ENCODE measurements at regions of chr1 and their contacts with region 1.

Region 1: GRCh38 chr1:210143465-210144062 is 89.0 kb upstream of the SERTAD4 start:
- DNase-seq: peak; percentile 63
- ATAC-seq: no peak
- H3K4me3 Mint-ChIP-seq: no peak overlapping the region
- H3K27ac Mint-ChIP-seq: no peak overlapping the region
- H3K4me1 Mint-ChIP-seq: no peaks in the 10 kb centered on the region
- H3K27me3 Mint-ChIP-seq: peaks cover 4% of the 10 kb centered on the region

Region 2: DNA sequence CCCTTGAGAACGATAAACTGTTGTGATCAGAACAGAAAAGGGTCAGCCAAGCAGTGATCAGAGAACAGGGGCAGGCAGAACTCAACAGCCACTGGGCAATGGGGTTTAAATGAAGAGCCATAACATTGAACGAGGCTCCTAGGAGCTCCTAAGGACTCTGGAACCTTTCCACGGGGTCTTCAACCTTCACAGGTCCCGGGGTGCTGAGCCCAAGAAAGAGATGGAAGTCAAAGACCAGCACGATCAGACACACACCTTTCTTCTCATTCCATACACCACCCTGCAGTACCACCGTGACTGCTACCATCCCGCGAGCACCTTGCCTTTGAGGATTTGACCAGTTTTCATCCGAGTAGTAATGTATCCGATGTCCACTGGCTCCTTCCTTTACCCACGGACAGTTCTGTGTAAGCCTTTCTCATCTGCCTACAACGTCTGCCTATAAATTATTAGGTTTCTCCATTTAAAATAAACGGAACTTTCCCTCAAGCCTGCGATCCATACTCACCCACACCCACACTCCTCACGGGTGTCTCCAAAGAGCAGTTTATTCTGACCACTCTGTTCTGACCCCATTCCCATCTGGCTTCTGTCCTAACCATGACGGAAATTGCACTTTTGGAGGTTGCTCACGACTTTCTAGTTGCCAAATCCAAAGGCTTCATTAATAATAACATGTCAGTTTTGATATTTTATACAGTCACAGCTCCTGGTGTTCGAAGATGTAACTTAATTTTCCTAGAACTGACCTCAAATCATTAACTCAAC is 168.3 kb after region 1 on chr1:
- CTCF ChIA-PET with region 1: interaction called, 22 read pairs
- POLR2A ChIA-PET with region 1: no interaction called
- DNase-seq: no peak
- ATAC-seq: no peak
- H3K4me3 Mint-ChIP-seq: no peak overlapping the region
- H3K27ac Mint-ChIP-seq: no peak overlapping the region
- H3K4me1 Mint-ChIP-seq: peaks cover 6% of the 10 kb centered on the region
- H3K27me3 Mint-ChIP-seq: peaks cover 33% of the 10 kb centered on the region

Measured in activated CD8-positive, alpha-beta T cell treated with anti-CD3 and anti-CD28 coated beads, Interleukin-2, amount 10 ng/mL, durations not matched to agents 7 days and 5 days (primary cell).